HepG2 (cell line): ENCODE measurements at regions of chr16 and their contacts with region 1.

Region 1: GRCh38 chr16:13896543-13897183 is 23.3 kb upstream of the ERCC4 start:
- DNase-seq: peak; percentile 25
- ATAC-seq: no peak; the same call in 2 of the 3 replicates
- H3K4me3 ChIP-seq: no peak overlapping the region
- H3K27ac ChIP-seq: no peak overlapping the region
- H3K4me1 ChIP-seq: no peaks in the 10 kb centered on the region
- H3K27me3 ChIP-seq: peaks cover 0 to 9% of the 10 kb centered on the region in 2 experiments; a peak in 1 of 5 replicates
- CTCF ChIP-seq: peak; percentile 44
- EP300 ChIP-seq: no peak
- POLR2A ChIP-seq: no peak
- RAD21 ChIP-seq: peak; percentile 16; the same call in 1 of the 2 replicates

Region 2: DNA sequence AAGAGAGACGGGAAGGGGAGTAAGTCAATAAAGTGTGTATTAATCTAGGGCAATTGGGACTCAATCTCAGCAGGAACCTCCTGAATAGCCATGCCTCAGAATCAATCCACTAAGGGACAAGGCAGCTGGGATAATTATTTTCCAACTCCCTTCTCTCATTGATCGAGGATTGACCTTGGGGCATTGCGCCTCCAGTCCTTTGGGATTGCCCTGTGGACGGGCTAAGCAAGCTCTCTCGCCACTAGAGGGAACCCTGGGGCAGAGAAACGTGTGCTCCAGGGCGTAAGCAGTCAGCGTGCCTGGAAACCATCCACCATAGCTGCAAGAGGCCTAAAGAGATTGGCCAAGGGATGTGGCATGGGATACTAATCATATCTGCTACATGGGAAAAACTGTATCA is 30.6 kb before region 1 on chr16:
- CTCF ChIA-PET with region 1: no interaction called
- POLR2A ChIA-PET with region 1: no interaction called
- in situ Hi-C with region 1: no loop called
- intact Hi-C with region 1: loop called (anchors 1 kb)
- DNase-seq: peak; percentile 86
- ATAC-seq: peak; percentile 100
- H3K4me3 ChIP-seq: no peak overlapping the region
- H3K27ac ChIP-seq: no peak overlapping the region
- H3K4me1 ChIP-seq: peaks cover 14% of the 10 kb centered on the region
- H3K27me3 ChIP-seq: peaks cover 0 to 2% of the 10 kb centered on the region in 2 experiments; a peak in 1 of 5 replicates
- CTCF ChIP-seq: peak; percentile 98
- EP300 ChIP-seq: no peak
- POLR2A ChIP-seq: no peak
- RAD21 ChIP-seq: peak; percentile 92